ENCODE measurements at regions of chr21 and their contacts with region 1.

Region 1: DNA sequence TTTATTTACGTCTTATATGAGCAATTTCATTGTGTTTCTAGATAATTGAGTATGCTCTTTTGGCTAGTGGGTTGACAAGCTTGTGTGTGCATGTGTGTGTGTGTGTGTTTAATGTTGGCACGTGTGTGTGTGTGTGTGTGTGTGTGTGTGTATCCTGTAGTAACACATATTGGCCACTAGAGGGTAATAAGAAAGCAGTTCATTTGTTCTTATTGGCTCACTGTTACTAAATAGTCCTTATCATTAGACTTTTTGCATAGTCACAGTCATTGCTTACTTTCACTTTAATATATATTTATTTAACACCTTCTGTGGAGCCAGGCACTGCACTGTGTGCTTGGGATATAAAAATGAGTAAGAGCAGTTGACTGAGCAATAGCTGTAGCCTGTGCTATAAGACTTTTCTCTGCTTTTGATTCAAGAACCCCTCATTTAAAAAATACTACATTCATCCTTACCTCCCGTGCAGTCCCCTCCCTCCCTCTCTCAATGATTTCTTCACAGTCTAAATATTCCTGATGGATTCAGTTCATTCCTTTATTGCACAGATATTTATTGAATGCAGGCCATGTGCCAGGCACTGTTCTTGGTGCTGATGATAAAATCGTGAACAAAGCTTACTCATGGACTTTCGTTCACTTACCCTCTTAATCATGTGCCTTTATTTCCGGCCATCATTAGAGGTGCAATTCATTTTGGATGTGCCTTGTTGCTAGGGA is 96.7 kb downstream of the DYRK1A start:
- DNase-seq: peak; percentile 41 to 51 (median 47)
- ATAC-seq: peak; percentile 74
- H3K4me3 ChIP-seq: no peak overlapping the region
- H3K27ac ChIP-seq: no peak overlapping the region
- H3K4me1 ChIP-seq: peaks cover 0 to 29% of the 10 kb centered on the region in 2 experiments; a peak in 3 of 5 replicates
- H3K27me3 ChIP-seq: no peaks in the 10 kb centered on the region
- CTCF ChIP-seq: peak; percentile 59 to 84 (median 70)
- EP300 ChIP-seq: no peak
- POLR2A ChIP-seq: no peak
- RAD21 ChIP-seq: peak in 1 of 2 experiments; percentile 68; a peak in 3 of 4 replicates

Region 2: GRCh38 chr21:37267269-37268184 is 195.7 kb before region 1 on chr21 and contains the start of gene VPS26C:
- CTCF ChIA-PET with region 1: no interaction called
- POLR2A ChIA-PET with region 1: interaction called, 3 read pairs
- in situ Hi-C with region 1: no loop called
- intact Hi-C with region 1: loop called (anchors 5 kb)
- DNase-seq: peak; percentile 93 to 100 (median 95)
- ATAC-seq: peak; percentile 91
- H3K4me3 ChIP-seq: peak within 1 kb of the TSS; percentile 71
- H3K27ac ChIP-seq: peak within 1 kb of the TSS; percentile 99
- H3K4me1 ChIP-seq: peaks cover 26 to 31% of the 10 kb centered on the region in 2 experiments; a peak in 4 of 5 replicates
- H3K27me3 ChIP-seq: no peaks in the 10 kb centered on the region
- CTCF ChIP-seq: 0 out of 6 replicates have a peak, but pooled peaks of 1 of the 3 experiments have one; percentile 8
- EP300 ChIP-seq: peak; percentile 23
- POLR2A ChIP-seq: peak; percentile 99
- RAD21 ChIP-seq: peak in 1 of 2 experiments; percentile 29; a peak in 2 of 4 replicates
- polyA plus RNA-seq, gene VPS26C: 32.8 to 42.2 TPM

Region 3: GRCh38 chr21:37475186-37475868 is 12.1 kb after region 1 on chr21:
- CTCF ChIA-PET with region 1: interaction called, 3 read pairs
- POLR2A ChIA-PET with region 1: interaction called, 14 read pairs
- in situ Hi-C with region 1: no loop called
- intact Hi-C with region 1: no loop called
- DNase-seq: no peak
- ATAC-seq: peak; percentile 37; the same call in 2 of the 3 replicates
- H3K4me3 ChIP-seq: no peak overlapping the region
- H3K27ac ChIP-seq: no peak overlapping the region
- H3K4me1 ChIP-seq: no peaks in the 10 kb centered on the region
- H3K27me3 ChIP-seq: no peaks in the 10 kb centered on the region
- CTCF ChIP-seq: no peak
- EP300 ChIP-seq: no peak
- POLR2A ChIP-seq: no peak
- RAD21 ChIP-seq: no peak

Region 4: DNA sequence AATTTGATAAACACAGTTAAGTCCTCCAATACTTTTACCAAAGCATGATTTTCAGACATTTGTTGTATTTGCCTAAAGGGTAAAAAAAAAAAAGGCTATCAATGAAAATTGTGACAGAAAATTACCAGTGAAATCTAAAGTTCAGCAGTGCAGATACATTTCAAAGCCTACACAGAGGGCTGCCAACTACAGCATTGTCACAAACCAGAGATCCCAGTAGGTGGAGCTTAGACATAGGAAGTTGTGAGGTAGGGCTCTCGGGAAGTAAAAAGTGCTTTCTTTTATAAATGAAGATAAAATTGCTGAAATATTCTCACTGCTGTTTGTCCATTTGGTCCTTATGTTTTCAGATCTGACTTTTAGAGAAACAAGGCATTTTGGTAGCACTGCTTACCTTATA is 26.3 kb after region 1 on chr21:
- CTCF ChIA-PET with region 1: no interaction called
- POLR2A ChIA-PET with region 1: no interaction called
- in situ Hi-C with region 1: no loop called
- intact Hi-C with region 1: no loop called
- DNase-seq: no peak
- ATAC-seq: peak; percentile 66; the same call in 2 of the 3 replicates
- H3K4me3 ChIP-seq: no peak overlapping the region
- H3K27ac ChIP-seq: no peak overlapping the region
- H3K4me1 ChIP-seq: no peaks in the 10 kb centered on the region
- H3K27me3 ChIP-seq: no peaks in the 10 kb centered on the region
- CTCF ChIP-seq: no peak
- EP300 ChIP-seq: no peak
- POLR2A ChIP-seq: no peak
- RAD21 ChIP-seq: peak in 1 of 2 experiments; percentile 11; a peak in 1 of 4 replicates

Region 5: GRCh38 chr21:37582590-37582989 is 119.3 kb after region 1 on chr21:
- CTCF ChIA-PET with region 1: no interaction called
- POLR2A ChIA-PET with region 1: no interaction called
- in situ Hi-C with region 1: no loop called
- intact Hi-C with region 1: loop called (anchors 5 kb)
- DNase-seq: peak; percentile 37 to 78 (median 60)
- ATAC-seq: peak; percentile 99
- H3K4me3 ChIP-seq: no peak overlapping the region
- H3K27ac ChIP-seq: no peak overlapping the region
- H3K4me1 ChIP-seq: no peaks in the 10 kb centered on the region; a peak in 1 of 5 replicates
- H3K27me3 ChIP-seq: peaks cover 0 to 6% of the 10 kb centered on the region in 2 experiments; a peak in 1 of 5 replicates
- CTCF ChIP-seq: peak; percentile 78 to 93 (median 91)
- EP300 ChIP-seq: no peak; the same call in none of the 2 replicates
- POLR2A ChIP-seq: no peak
- RAD21 ChIP-seq: peak; percentile 67 to 95

Measured in K562 (cell line).